ENCODE measurements at regions of chr6 and their contacts with region 1.

Region 1: DNA sequence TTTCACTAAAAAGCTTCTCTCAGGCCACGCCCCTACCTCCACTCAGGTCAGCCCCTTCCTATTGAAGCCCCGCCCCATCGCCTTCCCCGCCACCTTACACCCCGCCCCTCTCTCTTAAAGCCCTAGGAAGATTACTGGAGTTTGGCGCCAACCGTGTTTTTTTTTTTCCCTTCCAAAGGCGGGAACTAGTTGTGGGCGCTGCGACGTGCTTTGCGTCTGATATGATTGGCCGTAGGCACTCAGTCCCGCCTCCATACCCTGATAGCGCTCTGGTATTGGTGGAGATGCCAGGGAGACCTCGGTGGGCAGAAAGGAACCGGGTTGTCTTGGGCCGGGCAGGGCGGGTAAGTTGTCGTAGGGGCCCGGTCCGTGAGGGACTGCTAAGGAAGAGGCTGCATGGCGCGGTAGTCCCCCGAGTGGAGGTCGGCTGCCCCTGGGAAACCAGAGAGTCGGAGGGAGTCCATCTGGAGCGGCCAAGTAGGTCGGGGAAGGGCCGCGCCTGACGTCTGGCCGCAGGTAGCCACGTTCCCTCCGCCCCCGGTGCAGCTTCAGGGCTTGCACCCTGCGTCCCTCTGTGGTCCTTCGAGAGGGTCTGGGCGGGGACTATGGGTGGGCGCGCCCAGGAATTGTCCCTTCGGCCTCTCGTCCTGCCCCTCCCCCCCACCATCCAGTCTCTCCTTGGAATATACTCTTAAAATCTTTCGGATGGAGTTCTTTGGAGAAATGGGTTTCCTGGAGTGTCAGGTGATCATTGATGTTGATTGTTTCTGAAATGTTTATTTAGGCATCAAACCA is at the start of gene CASP8AP2:
- DNase-seq: peak; percentile 92 to 98
- H3K4me3 ChIP-seq: peak within 1 kb of the TSS; percentile 85 to 90 (median 88)
- H3K27ac ChIP-seq: peak within 1 kb of the TSS; percentile 96
- H3K4me1 ChIP-seq: peaks cover 0 to 7% (median 3%) of the 10 kb centered on the region in 4 experiments; a peak in 5 of 7 replicates
- H3K27me3 ChIP-seq: no peaks in the 10 kb centered on the region
- CTCF ChIP-seq: no peak
- EP300 ChIP-seq: no peak
- POLR2A ChIP-seq: peak; percentile 92 to 99
- RAD21 ChIP-seq: no peak
- total RNA-seq, gene CASP8AP2: 31.5 and 32.1 TPM in 2 replicates

Region 2: GRCh38 chr6:89799756-89800155 is 30.0 kb before region 1 on chr6:
- CTCF ChIA-PET with region 1: no interaction called
- POLR2A ChIA-PET with region 1: interaction called, 14 read pairs
- DNase-seq: no peak
- H3K4me3 ChIP-seq: peak overlapping the region in 1 of 4 experiments; percentile 1; a peak in 1 of 8 replicates
- H3K27ac ChIP-seq: peak overlapping the region; percentile 63
- H3K4me1 ChIP-seq: peaks cover 3 to 15% (median 10%) of the 10 kb centered on the region in 4 experiments; a peak in 4 of 7 replicates
- H3K27me3 ChIP-seq: no peaks in the 10 kb centered on the region
- CTCF ChIP-seq: no peak
- EP300 ChIP-seq: peak in 1 of 2 experiments; percentile 38; a peak in 1 of 3 replicates
- POLR2A ChIP-seq: no peak
- RAD21 ChIP-seq: no peak

Region 3: GRCh38 chr6:89819336-89820130 is 10.3 kb before region 1 on chr6 and contains the start of gene MDN1:
- CTCF ChIA-PET with region 1: interaction called, 14 read pairs
- POLR2A ChIA-PET with region 1: interaction called, 107 read pairs
- DNase-seq: peak; percentile 88 to 90
- H3K4me3 ChIP-seq: peak within 1 kb of the TSS; percentile 83 to 93 (median 91)
- H3K27ac ChIP-seq: peak within 1 kb of the TSS; percentile 93
- H3K4me1 ChIP-seq: peaks cover 4 to 18% (median 11%) of the 10 kb centered on the region in 4 experiments
- H3K27me3 ChIP-seq: no peaks in the 10 kb centered on the region
- CTCF ChIP-seq: no peak
- EP300 ChIP-seq: 0 out of 3 replicates have a peak, but pooled peaks of 1 of the 2 experiments have one; percentile 28
- POLR2A ChIP-seq: peak; percentile 82 to 89
- RAD21 ChIP-seq: no peak
- total RNA-seq, gene MDN1: 175 and 179 TPM in 2 replicates

Region 4: GRCh38 chr6:89840538-89840937 is 10.8 kb after region 1 on chr6:
- CTCF ChIA-PET with region 1: interaction called, 3 read pairs
- POLR2A ChIA-PET with region 1: interaction called, 26 read pairs
- DNase-seq: no peak
- H3K4me3 ChIP-seq: no peak overlapping the region
- H3K27ac ChIP-seq: no peak overlapping the region
- H3K4me1 ChIP-seq: peaks cover 0 to 2% (median 0%) of the 10 kb centered on the region in 4 experiments; a peak in 3 of 7 replicates
- H3K27me3 ChIP-seq: no peaks in the 10 kb centered on the region
- CTCF ChIP-seq: no peak
- EP300 ChIP-seq: no peak
- POLR2A ChIP-seq: no peak
- RAD21 ChIP-seq: no peak

Region 5: GRCh38 chr6:89940225-89941027 is 110.6 kb after region 1 on chr6:
- CTCF ChIA-PET with region 1: no interaction called
- POLR2A ChIA-PET with region 1: no interaction called
- DNase-seq: peak in 1 of 2 experiments; percentile 34
- H3K4me3 ChIP-seq: no peak overlapping the region
- H3K27ac ChIP-seq: no peak overlapping the region
- H3K4me1 ChIP-seq: no peaks in the 10 kb centered on the region; a peak in 2 of 7 replicates
- H3K27me3 ChIP-seq: no peaks in the 10 kb centered on the region
- CTCF ChIP-seq: peak; percentile 26 to 87 (median 81)
- EP300 ChIP-seq: no peak
- POLR2A ChIP-seq: no peak
- RAD21 ChIP-seq: peak; percentile 93 to 95